WTC11 (cell line): ENCODE measurements at regions of chr1 and their contacts with region 1.

Region 1: DNA sequence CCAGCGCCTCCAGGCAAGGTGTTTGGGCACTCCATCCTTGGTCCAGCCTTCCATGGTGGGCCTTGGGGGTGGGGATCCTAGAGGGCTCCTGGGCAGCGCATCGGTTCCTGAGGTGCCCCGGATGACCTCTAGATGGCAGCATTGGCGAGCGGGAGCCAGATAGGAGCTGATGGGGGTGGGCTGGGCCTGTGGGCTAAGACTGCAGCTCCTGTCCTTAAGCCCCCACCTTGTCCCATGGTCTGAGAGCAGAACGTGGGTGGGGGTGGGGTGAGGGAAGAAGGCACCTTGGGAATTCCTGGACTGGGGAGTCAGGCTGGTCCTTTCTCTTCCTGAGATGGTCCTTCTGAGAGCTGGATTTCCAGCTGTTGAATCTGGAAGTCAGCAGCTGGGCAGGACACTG is 93.4 kb upstream of the CSF3R start:
- DNase-seq: peak; percentile 89
- ATAC-seq: peak; percentile 92
- H3K4me3 Mint-ChIP-seq: no peak overlapping the region
- H3K27ac Mint-ChIP-seq: no peak overlapping the region
- H3K4me1 Mint-ChIP-seq: peaks cover 16% of the 10 kb centered on the region
- H3K27me3 Mint-ChIP-seq: no peaks in the 10 kb centered on the region
- CTCF ChIP-seq: peak; percentile 76

Region 2: DNA sequence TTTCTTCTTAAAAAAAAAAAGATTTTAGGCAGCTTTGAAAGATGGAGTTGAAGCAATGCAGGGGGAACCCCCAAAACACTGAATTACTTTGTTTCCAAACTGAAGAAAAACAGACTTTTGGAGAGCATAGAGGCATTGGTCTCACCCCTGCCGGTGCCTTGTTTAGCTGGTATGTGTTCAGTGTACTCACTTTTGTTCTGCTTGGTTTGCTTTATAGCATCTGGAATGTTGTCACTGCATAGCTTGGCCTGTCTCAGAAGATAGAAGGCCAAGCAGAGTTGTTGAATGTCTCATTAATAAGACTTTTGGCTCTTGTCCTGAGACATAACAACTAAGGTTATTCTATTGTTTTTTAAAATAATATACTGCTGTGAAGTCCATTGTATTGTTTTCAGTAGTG is 344.9 kb before region 1 on chr1:
- CTCF ChIA-PET with region 1: no interaction called
- POLR2A ChIA-PET with region 1: no interaction called
- DNase-seq: no peak
- ATAC-seq: no peak
- H3K4me3 Mint-ChIP-seq: no peak overlapping the region
- H3K27ac Mint-ChIP-seq: no peak overlapping the region
- H3K4me1 Mint-ChIP-seq: 0 out of 2 replicates have a peak, but pooled peaks cover 2% of the 10 kb centered on the region
- H3K27me3 Mint-ChIP-seq: no peaks in the 10 kb centered on the region
- CTCF ChIP-seq: no peak

Region 3: GRCh38 chr1:36471830-36472641 is 104.1 kb before region 1 on chr1:
- CTCF ChIA-PET with region 1: no interaction called
- POLR2A ChIA-PET with region 1: no interaction called
- DNase-seq: no peak
- ATAC-seq: peak; percentile 52
- H3K4me3 Mint-ChIP-seq: no peak overlapping the region
- H3K27ac Mint-ChIP-seq: no peak overlapping the region
- H3K4me1 Mint-ChIP-seq: no peaks in the 10 kb centered on the region; the same call in 1 of the 2 replicates
- H3K27me3 Mint-ChIP-seq: peaks cover 44% of the 10 kb centered on the region
- CTCF ChIP-seq: no peak

Region 4: DNA sequence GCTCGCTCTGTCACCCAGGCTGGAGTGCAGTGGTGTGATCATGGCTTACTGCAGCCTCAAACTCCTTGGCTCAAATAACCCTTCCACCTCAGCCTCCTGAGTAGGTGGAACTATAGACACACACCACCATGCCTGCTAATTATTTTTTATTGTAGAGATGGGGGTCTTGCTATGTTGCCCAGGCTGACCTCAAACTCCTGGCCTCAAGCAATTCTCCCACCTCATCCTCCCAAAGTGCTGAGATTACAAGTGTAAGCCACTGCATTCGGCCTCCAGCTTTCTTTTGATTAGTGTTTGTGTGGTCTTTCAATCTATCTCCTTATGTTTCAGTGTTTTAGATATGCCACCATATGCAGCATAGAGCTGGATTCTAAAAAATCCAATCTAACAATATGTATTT is 73.5 kb before region 1 on chr1:
- CTCF ChIA-PET with region 1: no interaction called
- POLR2A ChIA-PET with region 1: no interaction called
- DNase-seq: no peak
- ATAC-seq: no peak
- H3K4me3 Mint-ChIP-seq: no peak overlapping the region
- H3K27ac Mint-ChIP-seq: no peak overlapping the region
- H3K4me1 Mint-ChIP-seq: no peaks in the 10 kb centered on the region
- H3K27me3 Mint-ChIP-seq: no peaks in the 10 kb centered on the region; the same call in 1 of the 2 replicates
- CTCF ChIP-seq: no peak

Region 5: GRCh38 chr1:36553591-36554322 is 22.4 kb before region 1 on chr1:
- CTCF ChIA-PET with region 1: interaction called, 13 read pairs
- POLR2A ChIA-PET with region 1: no interaction called
- DNase-seq: peak; percentile 92
- ATAC-seq: peak; percentile 100
- H3K4me3 Mint-ChIP-seq: no peak overlapping the region
- H3K27ac Mint-ChIP-seq: no peak overlapping the region
- H3K4me1 Mint-ChIP-seq: no peaks in the 10 kb centered on the region
- H3K27me3 Mint-ChIP-seq: peaks cover 31% of the 10 kb centered on the region
- CTCF ChIP-seq: peak; percentile 77

Region 6: DNA sequence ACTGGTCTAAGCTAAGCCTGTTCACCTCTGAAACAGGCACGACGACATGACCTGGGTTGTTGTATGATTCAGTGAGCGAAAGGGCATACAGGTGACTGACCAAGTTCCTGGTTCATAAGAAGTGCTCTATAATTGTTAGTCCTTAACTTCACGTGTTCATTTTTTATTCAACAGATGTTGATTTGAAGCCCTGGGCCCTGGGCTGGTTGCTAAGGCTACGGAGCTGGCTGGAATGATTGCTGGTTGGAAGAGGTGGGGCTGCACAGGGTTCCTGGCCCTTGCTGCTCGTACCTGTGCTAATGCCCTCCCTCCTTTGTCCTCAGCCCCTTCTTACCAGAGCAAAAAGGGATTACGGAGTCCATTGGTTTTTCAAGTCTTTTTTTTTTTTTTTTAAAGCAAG is 17.9 kb after region 1 on chr1:
- CTCF ChIA-PET with region 1: interaction called, 59 read pairs
- POLR2A ChIA-PET with region 1: no interaction called
- DNase-seq: no peak
- ATAC-seq: no peak
- H3K4me3 Mint-ChIP-seq: no peak overlapping the region
- H3K27ac Mint-ChIP-seq: no peak overlapping the region
- H3K4me1 Mint-ChIP-seq: peaks cover 19% of the 10 kb centered on the region
- H3K27me3 Mint-ChIP-seq: no peaks in the 10 kb centered on the region; the same call in 1 of the 2 replicates
- CTCF ChIP-seq: no peak

Region 7: GRCh38 chr1:36650200-36651065 is 74.3 kb after region 1 on chr1:
- CTCF ChIA-PET with region 1: interaction called, 11 read pairs
- POLR2A ChIA-PET with region 1: no interaction called
- DNase-seq: peak; percentile 89
- ATAC-seq: peak; percentile 94
- H3K4me3 Mint-ChIP-seq: no peak overlapping the region
- H3K27ac Mint-ChIP-seq: no peak overlapping the region
- H3K4me1 Mint-ChIP-seq: peaks cover 13% of the 10 kb centered on the region
- H3K27me3 Mint-ChIP-seq: peaks cover 11% of the 10 kb centered on the region; the same call in 1 of the 2 replicates
- CTCF ChIP-seq: peak; percentile 81

Region 8: DNA sequence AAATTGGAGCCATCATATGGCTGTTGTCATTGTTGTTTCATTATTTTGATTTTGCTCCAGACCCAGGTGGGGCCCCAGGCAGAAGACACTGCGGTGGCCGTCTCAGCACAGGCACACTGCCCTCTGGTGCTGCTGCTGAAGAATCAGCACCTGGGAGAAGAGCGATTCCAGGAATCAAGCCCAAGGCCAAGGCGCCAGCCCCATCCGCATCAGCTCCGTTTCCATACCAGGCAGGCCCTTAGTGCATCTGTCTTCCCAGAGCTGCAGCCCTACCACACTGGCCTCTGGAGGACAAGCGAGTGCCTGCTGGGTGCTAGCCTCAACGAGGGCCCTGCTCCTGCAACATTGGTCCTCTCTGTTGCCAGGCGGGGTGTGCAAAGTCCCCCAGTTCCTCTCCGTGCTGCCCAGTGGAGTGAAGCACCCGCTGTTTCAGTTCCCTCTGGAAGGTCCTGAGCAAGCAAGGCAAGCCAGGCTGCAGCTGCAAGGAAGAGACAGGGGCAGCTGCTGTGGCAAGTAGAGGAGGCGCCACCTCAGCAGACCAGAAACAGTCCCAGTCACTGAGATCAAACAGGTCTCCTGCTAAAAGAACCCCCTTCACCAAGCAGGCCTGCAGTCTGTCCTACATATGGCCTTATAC is 453.0 kb after region 1 on chr1:
- CTCF ChIA-PET with region 1: interaction called, 11 read pairs
- POLR2A ChIA-PET with region 1: no interaction called
- DNase-seq: peak; percentile 67
- ATAC-seq: peak; percentile 74
- H3K4me3 Mint-ChIP-seq: no peak overlapping the region
- H3K27ac Mint-ChIP-seq: no peak overlapping the region
- H3K4me1 Mint-ChIP-seq: peaks cover 37% of the 10 kb centered on the region
- H3K27me3 Mint-ChIP-seq: peaks cover 48% of the 10 kb centered on the region
- CTCF ChIP-seq: no peak